ENCODE measurements at regions of chr11 and their contacts with region 1.

Region 1: GRCh38 chr11:118290923-118291322 is 13.6 kb upstream of the CD3E start:
- DNase-seq: peak; percentile 86
- ATAC-seq: peak; percentile 69
- H3K4me3 ChIP-seq: peak overlapping the region; percentile 42; the same call in 1 of the 2 replicates
- H3K27ac ChIP-seq: no peak overlapping the region
- H3K4me1 ChIP-seq: peaks cover 34% of the 10 kb centered on the region
- H3K27me3 ChIP-seq: no peaks in the 10 kb centered on the region
- CTCF ChIP-seq: peak; percentile 92

Region 2: GRCh38 chr11:118247047-118247446 is 43.9 kb before region 1 on chr11:
- CTCF ChIA-PET with region 1: no interaction called
- POLR2A ChIA-PET with region 1: interaction called, 3 read pairs
- intact Hi-C with region 1: loop called (anchors 1 kb)
- DNase-seq: peak; percentile 91
- ATAC-seq: peak; percentile 94
- H3K4me3 ChIP-seq: no peak overlapping the region
- H3K27ac ChIP-seq: peak overlapping the region; percentile 82
- H3K4me1 ChIP-seq: peaks cover 41% of the 10 kb centered on the region
- H3K27me3 ChIP-seq: no peaks in the 10 kb centered on the region
- CTCF ChIP-seq: peak; percentile 13; the same call in 1 of the 2 replicates

Region 3: GRCh38 chr11:118263695-118264567 is 27.0 kb before region 1 on chr11 and contains the start of gene MPZL2:
- CTCF ChIA-PET with region 1: interaction called, 7 read pairs
- POLR2A ChIA-PET with region 1: interaction called, 3 read pairs
- intact Hi-C with region 1: loop called (anchors 2 kb)
- DNase-seq: peak; percentile 95
- ATAC-seq: peak; percentile 91
- H3K4me3 ChIP-seq: peak within 1 kb of the TSS; percentile 82
- H3K27ac ChIP-seq: peak within 1 kb of the TSS; percentile 94
- H3K4me1 ChIP-seq: peaks cover 28% of the 10 kb centered on the region
- H3K27me3 ChIP-seq: no peaks in the 10 kb centered on the region
- CTCF ChIP-seq: peak; percentile 46
- total RNA-seq, gene MPZL2: 40.6 and 51.5 TPM in 2 replicates

Measured in PC-3 (cell line).